Esophagus muscularis mucosa (tissue), 4 donors: ENCODE measurements at regions of chr5 and their contacts with region 1.

Region 1: DNA sequence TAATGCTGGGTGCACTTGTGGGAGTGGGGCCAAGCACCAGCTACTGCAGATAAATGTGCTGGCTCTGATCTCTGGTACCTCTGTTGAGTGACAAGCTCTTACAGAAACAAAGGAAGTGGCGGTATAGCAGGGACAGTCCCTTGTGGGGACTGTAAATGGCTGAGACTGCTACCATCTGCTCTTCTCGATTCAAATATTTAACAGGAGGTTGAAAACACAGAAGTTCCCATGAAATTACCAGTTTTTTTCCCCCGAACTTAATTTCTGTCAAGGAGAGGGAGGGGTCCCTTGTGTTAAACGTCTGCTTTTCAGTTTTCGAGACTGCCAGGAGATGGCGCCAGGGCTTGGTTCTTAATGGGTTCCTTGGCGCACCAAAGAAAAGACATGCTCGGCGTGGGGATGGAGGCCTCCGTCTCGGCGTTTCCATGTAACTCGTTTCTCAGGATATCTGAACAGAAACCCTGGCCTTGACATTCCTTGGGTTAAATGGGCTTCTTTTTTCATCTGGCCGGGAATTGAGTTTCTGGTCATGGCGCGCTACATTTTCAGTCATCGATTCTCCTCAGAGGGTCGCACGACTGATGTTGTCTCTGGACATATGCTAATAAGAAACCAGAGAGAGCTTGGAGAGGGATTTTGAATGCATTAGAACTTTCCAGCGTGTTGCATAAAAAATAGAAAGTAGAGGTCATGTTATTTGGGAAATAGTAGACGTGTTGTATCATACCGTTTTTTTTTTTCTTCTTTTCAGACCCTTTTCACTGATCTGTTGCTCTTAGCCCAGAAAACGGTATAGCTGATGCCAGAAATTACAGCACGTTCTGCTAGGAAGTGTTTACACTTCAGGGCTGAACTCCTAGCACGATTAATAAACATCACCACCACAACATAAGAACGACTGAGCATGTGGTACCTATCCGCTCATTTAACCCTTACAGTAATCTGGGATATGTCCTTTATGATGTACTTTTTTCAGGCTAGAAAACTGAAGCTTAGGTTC is 64.0 kb downstream of the CARTPT start:
- DNase-seq: no peak
- H3K4me3 ChIP-seq: peak overlapping the region; percentile 32 to 42 (median 36)
- H3K27ac ChIP-seq: peak overlapping the region; percentile 59 to 80 (median 72)
- H3K4me1 ChIP-seq: peaks cover 4 to 24% (median 21%) of the 10 kb centered on the region in 4 donors
- H3K27me3 ChIP-seq: no peaks in the 10 kb centered on the region
- CTCF ChIP-seq: peak; percentile 82 to 89 (median 83)
- EP300 ChIP-seq: no peak
- POLR2A ChIP-seq: no peak

Region 2: GRCh38 chr5:72018146-72018803 is 235.2 kb after region 1 on chr5:
- intact Hi-C with region 1: loop called (anchors 5 kb)
- DNase-seq: peak; percentile 10
- H3K4me3 ChIP-seq: no peak overlapping the region
- H3K27ac ChIP-seq: no peak overlapping the region
- H3K4me1 ChIP-seq: peaks cover 3 to 14% (median 10%) of the 10 kb centered on the region in 4 donors
- H3K27me3 ChIP-seq: no peaks in the 10 kb centered on the region
- CTCF ChIP-seq: peak; percentile 62 to 93 (median 65)
- EP300 ChIP-seq: no peak
- POLR2A ChIP-seq: no peak